ENCODE measurements at regions of chr6 and their contacts with region 1.

Region 1: GRCh38 chr6:11496152-11497060 is 41.1 kb upstream of the TMEM170B start:
- DNase-seq: peak; percentile 87
- H3K4me3 Mint-ChIP-seq: no peak overlapping the region
- H3K27ac Mint-ChIP-seq: no peak overlapping the region
- H3K4me1 Mint-ChIP-seq: peaks cover 6% of the 10 kb centered on the region
- H3K27me3 Mint-ChIP-seq: no peaks in the 10 kb centered on the region
- CTCF ChIP-seq: peak; percentile 95

Region 2: GRCh38 chr6:11064836-11065235 is 431.6 kb before region 1 on chr6:
- CTCF ChIA-PET with region 1: interaction called, 23 read pairs
- POLR2A ChIA-PET with region 1: interaction called, 6 read pairs
- intact Hi-C with region 1: loop called (anchors 1 kb)
- DNase-seq: no peak
- H3K4me3 Mint-ChIP-seq: no peak overlapping the region
- H3K27ac Mint-ChIP-seq: no peak overlapping the region
- H3K4me1 Mint-ChIP-seq: no peaks in the 10 kb centered on the region
- H3K27me3 Mint-ChIP-seq: no peaks in the 10 kb centered on the region
- CTCF ChIP-seq: no peak

Region 3: DNA sequence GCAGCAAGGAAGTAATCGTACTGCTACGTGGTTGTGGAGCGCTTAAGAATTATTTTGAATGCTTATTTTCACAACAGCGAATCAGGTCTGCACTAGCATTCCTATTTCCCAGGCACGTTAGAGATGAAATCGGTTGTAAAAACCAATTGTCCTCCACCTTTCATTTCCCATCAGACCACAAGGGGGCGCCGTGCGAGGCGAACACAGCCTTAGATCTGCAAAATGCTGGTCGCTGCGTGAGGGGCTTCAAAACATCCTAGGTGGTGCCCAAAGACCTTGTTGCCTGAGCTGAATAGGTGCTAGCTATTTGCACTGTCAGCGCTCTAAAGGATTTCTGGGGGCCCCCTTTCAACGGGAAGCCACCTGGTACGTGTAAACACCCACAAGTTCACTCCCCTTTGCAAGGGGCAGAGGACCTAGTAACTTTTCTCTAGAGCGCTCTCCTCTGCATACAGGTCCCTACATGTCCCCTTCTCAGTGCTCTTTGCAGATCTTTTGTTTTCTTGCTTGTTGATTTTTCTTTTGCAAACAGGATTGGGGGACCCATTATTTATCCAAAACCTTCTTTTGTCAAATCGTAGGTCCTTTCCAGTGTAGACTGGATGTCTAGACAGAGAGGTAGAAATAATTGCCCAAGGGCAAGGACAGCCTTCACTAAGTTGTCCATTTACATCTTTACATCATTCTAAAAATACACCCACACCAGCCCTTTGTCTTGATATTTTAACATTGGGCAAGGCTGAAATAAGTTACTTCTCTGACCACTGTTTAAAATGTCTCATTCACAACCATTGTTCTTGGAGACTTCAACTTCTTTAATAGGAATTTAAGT is 323.7 kb before region 1 on chr6:
- CTCF ChIA-PET with region 1: interaction called, 45 read pairs
- POLR2A ChIA-PET with region 1: no interaction called
- intact Hi-C with region 1: loop called (anchors 1 kb)
- DNase-seq: peak; percentile 63
- H3K4me3 Mint-ChIP-seq: no peak overlapping the region
- H3K27ac Mint-ChIP-seq: no peak overlapping the region
- H3K4me1 Mint-ChIP-seq: peaks cover 6% of the 10 kb centered on the region
- H3K27me3 Mint-ChIP-seq: no peaks in the 10 kb centered on the region
- CTCF ChIP-seq: peak; percentile 68

Region 4: GRCh38 chr6:11251541-11252360 is 244.7 kb before region 1 on chr6:
- CTCF ChIA-PET with region 1: interaction called, 16 read pairs
- POLR2A ChIA-PET with region 1: no interaction called
- intact Hi-C with region 1: no loop called
- DNase-seq: peak; percentile 70
- H3K4me3 Mint-ChIP-seq: no peak overlapping the region
- H3K27ac Mint-ChIP-seq: peak overlapping the region; percentile 71
- H3K4me1 Mint-ChIP-seq: peaks cover 14% of the 10 kb centered on the region
- H3K27me3 Mint-ChIP-seq: no peaks in the 10 kb centered on the region
- CTCF ChIP-seq: no peak

Region 5: DNA sequence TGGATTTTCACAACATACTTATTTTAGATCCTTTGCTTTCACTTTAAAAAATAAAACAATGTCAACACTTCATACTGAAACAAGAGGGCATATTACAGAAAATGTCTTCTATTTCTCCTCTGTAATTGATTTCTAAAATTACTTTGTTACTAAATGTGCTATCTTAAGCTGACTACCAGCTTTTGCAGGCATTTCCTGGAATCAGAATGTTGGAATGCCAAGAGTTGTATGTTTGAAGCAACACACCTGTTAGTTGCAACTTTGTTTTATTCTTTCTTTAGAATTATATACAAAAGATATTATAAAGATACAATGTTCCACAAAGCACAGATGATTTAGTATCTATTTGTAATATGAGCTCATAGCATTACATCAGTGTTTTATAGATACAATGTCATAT is 21.4 kb before region 1 on chr6:
- CTCF ChIA-PET with region 1: interaction called, 10 read pairs
- POLR2A ChIA-PET with region 1: no interaction called
- intact Hi-C with region 1: no loop called
- DNase-seq: no peak
- H3K4me3 Mint-ChIP-seq: no peak overlapping the region
- H3K27ac Mint-ChIP-seq: no peak overlapping the region
- H3K4me1 Mint-ChIP-seq: no peaks in the 10 kb centered on the region
- H3K27me3 Mint-ChIP-seq: no peaks in the 10 kb centered on the region
- CTCF ChIP-seq: no peak

Region 6: DNA sequence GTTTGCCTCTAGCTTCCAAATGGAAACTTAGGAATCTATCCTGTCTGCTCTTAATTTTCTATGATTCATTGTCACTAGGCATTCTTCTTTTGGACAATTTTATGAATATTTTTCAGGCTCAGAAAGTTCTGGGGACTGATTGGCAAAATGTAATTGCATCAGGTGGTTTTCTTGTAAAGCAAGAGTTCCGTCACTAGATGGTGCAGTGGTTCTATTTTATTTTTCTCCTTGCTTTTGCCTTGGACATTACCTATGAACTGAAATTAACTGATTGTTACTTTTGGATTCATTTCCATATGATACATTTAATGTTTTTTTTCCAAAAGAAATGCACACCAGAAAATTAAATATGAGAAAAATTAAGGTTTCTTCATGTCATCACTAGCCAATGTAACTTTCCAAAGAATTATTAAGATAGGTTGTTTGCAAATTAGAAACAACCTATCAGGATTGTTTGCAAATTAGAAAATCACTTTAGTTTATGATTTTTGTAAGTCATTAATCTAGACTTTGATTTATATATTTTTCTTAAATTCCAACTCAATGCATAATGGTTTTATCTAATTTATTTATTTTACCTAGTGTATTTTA is 89.1 kb after region 1 on chr6:
- CTCF ChIA-PET with region 1: interaction called, 10 read pairs
- POLR2A ChIA-PET with region 1: no interaction called
- intact Hi-C with region 1: no loop called
- DNase-seq: peak; percentile 61
- H3K4me3 Mint-ChIP-seq: no peak overlapping the region
- H3K27ac Mint-ChIP-seq: no peak overlapping the region
- H3K4me1 Mint-ChIP-seq: no peaks in the 10 kb centered on the region
- H3K27me3 Mint-ChIP-seq: no peaks in the 10 kb centered on the region
- CTCF ChIP-seq: peak; percentile 60